ENCODE measurements at regions of chr9 and their contacts with region 1.

Region 1: DNA sequence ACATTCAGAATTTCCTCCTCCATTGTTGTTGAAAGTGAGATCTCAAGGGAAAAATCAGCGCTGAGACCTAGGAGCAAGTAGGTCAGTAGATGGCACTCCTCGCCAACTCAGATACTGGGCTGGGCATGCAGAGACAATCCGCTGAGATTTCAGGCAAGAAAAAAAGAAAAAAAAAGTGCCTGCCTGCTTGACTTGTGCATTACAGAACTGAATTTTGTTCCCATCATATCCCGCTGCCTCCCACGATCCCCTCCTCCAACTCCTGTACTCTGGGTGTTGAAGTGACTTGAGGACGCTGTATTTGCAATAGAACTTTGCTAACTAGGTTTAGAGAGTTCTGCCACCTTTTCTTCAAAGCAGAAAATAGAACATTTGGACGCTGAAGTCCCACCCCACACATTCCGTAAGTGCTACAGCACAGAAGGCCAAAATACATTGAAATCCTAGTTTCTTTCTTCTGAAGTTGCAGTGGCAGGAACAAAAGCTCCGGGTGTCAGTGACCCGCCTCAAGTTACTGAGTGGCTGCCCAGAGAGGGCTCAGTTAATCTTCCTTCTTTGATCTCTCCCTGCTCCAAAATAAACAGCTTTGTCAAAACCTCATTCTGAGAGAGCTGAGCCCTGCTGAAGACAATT is 265.8 kb downstream of the MLLT3 start:
- DNase-seq: peak; percentile 38 to 93 (median 67)

Region 2: GRCh38 chr9:20297646-20298084 is 58.9 kb before region 1 on chr9:
- intact Hi-C with region 1: no loop called
- DNase-seq: peak in 8 of 10 donors; percentile 50 to 94 (median 68)

Region 3: GRCh38 chr9:20788526-20789451 is 432.3 kb after region 1 on chr9:
- intact Hi-C with region 1: no loop called
- DNase-seq: no peak

Region 4: GRCh38 chr9:20941174-20941690 is 584.7 kb after region 1 on chr9:
- intact Hi-C with region 1: loop called (anchors 5 kb)
- DNase-seq: peak in 7 of 10 donors; percentile 21 to 88 (median 54)

Region 5: GRCh38 chr9:21110708-21111576 is 754.4 kb after region 1 on chr9:
- intact Hi-C with region 1: loop called (anchors 1 kb)
- DNase-seq: no peak

Measured in posterior cingulate gyrus (tissue), 11 donors.